Caco-2 (cell line): ENCODE measurements at regions of chr13 and their contacts with region 1.

Region 1: DNA sequence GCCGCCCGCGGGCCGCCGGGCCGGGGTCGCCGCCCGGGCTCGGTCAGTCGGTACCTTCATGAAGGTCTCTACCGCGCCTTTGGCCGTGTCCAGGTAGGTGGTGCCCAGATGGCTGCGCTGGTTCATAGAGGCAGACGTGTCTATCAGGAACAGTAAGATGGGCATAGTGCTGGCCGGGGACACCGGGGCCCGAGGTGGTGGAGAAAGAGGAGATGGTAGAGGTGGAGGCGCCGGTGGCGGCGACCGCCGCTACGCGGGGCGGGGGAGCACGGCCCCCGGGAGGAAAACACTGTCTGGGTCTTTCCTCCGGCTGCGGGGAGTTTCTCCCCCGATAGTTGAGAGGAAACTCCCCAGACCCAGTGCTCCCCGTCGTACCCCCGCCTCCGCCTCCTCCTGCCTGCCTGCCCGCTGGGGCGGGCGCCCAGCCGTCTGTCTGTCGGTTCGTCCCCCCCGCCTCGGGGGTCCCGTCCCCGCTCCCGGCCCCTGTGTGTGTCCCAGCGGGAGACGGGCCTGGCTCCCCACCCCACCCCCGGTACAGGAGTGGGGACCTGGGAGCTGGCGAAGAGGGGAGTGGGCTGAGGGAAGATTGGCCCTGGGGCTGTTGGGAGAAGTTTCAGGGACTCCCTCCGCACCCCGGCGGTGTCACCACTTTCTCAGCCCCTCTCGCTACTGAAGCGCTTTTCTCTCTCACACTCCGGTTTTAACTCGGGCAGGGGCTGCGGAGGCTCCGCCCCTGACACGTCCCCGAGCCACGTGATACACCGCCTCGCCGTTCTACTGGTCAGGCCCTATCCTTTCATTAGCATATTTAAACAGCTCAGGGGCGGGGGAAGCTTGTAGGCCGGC is at the start of gene INTS6:
- DNase-seq: peak; percentile 100
- H3K4me3 ChIP-seq: peak within 1 kb of the TSS; percentile 72
- H3K4me3 Mint-ChIP-seq: peak within 1 kb of the TSS; percentile 72
- H3K27ac Mint-ChIP-seq: peak within 1 kb of the TSS; percentile 82
- H3K4me1 ChIP-seq: peaks cover 12% of the 10 kb centered on the region; the same call in 1 of the 2 replicates
- H3K4me1 Mint-ChIP-seq: no peaks in the 10 kb centered on the region
- H3K27me3 ChIP-seq: no peaks in the 10 kb centered on the region
- H3K27me3 Mint-ChIP-seq: no peaks in the 10 kb centered on the region
- CTCF ChIP-seq: no peak
- total RNA-seq, gene INTS6: 42.6 and 46.7 TPM in 2 replicates

Region 2: DNA sequence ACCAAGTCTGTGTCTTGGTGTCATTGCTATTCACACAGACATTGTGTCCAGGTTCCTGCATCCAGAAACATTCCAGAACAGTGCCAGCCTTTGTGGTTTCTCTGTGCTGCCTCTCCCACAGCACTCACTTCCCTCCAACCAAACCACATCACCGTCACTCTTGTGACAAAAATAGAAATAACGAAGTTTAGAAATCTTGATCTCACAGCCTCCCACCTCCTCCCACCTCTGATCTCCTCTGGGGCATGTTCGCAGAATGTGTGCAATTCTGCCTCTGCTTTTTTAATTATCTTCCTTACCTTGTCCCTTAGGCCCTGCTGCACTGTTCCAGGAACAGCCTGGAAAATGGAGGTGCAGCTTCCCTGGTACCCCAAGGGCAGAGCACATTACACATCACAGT is 121.8 kb before region 1 on chr13:
- CTCF ChIA-PET with region 1: no interaction called
- POLR2A ChIA-PET with region 1: interaction called, 15 read pairs
- intact Hi-C with region 1: no loop called
- DNase-seq: no peak
- H3K4me3 ChIP-seq: no peak overlapping the region
- H3K4me3 Mint-ChIP-seq: no peak overlapping the region
- H3K27ac Mint-ChIP-seq: no peak overlapping the region
- H3K4me1 ChIP-seq: no peaks in the 10 kb centered on the region
- H3K4me1 Mint-ChIP-seq: no peaks in the 10 kb centered on the region
- H3K27me3 ChIP-seq: no peaks in the 10 kb centered on the region
- H3K27me3 Mint-ChIP-seq: no peaks in the 10 kb centered on the region
- CTCF ChIP-seq: no peak

Region 3: DNA sequence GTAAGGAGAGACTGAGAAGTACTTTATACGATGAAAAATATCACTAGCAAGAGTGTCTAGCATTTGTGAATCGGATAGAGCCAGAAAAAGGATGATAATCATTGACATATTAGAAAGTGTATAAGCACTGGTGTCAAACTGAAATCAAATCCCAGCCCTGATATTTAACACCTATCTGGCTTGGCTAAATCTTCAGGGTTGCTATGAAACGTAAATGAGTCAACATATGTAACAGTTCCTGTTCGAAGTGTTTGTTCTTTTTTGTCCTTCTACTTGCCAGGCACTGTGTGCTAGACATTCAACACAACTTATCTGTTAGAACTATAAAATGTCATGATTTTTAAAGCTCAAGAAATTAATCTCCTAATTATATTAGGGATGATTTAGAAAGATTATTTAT is 72.3 kb before region 1 on chr13:
- CTCF ChIA-PET with region 1: no interaction called
- POLR2A ChIA-PET with region 1: no interaction called
- intact Hi-C with region 1: no loop called
- DNase-seq: no peak
- H3K4me3 ChIP-seq: no peak overlapping the region
- H3K4me3 Mint-ChIP-seq: no peak overlapping the region
- H3K27ac Mint-ChIP-seq: no peak overlapping the region
- H3K4me1 ChIP-seq: no peaks in the 10 kb centered on the region
- H3K4me1 Mint-ChIP-seq: no peaks in the 10 kb centered on the region
- H3K27me3 ChIP-seq: no peaks in the 10 kb centered on the region
- H3K27me3 Mint-ChIP-seq: no peaks in the 10 kb centered on the region
- CTCF ChIP-seq: no peak

Region 4: DNA sequence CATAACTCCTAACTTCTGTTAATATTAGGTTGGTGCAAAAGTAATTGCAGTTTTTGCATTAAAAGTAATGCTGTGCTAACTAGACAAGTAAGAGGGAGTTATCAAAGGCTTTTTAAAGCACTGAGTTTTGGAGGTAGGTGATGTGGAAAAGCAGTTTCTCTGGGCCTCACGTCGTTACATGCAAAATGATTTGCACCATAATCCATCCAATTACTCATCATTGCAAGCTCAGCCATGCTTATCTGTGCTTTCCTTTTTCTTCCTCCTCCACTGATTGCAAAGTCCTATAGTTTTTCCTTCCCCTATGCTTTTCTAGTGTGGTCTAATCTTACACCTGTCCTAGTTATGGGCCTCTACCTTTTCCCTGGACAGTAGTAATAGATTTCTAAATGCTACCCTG is 35.6 kb after region 1 on chr13:
- CTCF ChIA-PET with region 1: no interaction called
- POLR2A ChIA-PET with region 1: no interaction called
- intact Hi-C with region 1: no loop called
- DNase-seq: no peak
- H3K4me3 ChIP-seq: no peak overlapping the region
- H3K4me3 Mint-ChIP-seq: no peak overlapping the region
- H3K27ac Mint-ChIP-seq: no peak overlapping the region
- H3K4me1 ChIP-seq: no peaks in the 10 kb centered on the region
- H3K4me1 Mint-ChIP-seq: no peaks in the 10 kb centered on the region
- H3K27me3 ChIP-seq: no peaks in the 10 kb centered on the region
- H3K27me3 Mint-ChIP-seq: peaks cover 3% of the 10 kb centered on the region
- CTCF ChIP-seq: no peak

Region 5: DNA sequence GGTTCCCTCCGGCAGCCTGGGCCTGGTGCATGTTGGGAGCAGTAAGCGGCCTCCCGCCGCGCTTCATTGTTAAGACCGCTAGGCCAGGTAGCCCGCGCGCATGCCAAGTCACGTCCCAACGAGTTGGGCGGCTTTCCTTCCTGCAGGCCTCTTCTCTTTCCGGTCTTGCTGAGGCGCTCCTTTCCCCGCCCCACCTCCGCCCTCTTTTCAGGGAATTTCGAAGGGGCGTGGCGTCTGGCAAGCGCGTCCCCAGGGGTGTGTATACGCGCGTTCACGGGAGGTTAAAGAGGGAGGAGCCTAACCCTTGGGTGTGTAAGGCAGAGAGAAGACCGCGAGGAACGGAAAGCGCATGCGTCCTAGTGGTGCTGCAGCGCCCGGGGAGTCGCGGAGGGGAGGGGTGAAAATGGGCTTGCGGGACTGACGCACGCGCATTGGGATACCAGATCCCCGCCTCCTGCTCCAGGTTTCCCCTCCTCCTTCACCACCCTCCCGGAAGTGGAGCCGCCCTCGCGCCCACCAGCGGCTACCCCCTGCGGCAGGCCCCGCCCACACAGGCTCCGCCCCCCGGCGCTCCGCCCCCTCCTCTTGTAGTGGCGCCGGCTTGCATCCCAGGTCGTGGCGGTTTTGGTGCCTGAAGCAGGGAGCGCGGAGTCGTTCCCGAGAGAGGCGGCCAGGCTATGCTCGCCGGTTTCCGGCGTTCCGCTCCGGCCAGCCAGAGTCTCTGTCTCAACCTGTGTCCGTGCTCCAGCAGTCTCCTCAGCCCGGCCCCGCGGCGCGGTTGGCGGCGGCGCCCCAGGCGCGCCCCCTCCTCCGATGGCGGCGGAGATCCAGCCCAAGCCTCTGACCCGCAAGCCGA is 131.5 kb after region 1 on chr13 and contains the start of gene WDFY2:
- CTCF ChIA-PET with region 1: interaction called, 3 read pairs
- POLR2A ChIA-PET with region 1: interaction called, 18 read pairs
- intact Hi-C with region 1: loop called (anchors 1 kb)
- DNase-seq: peak; percentile 99 to 100
- H3K4me3 ChIP-seq: peak within 1 kb of the TSS; percentile 70
- H3K4me3 Mint-ChIP-seq: peak within 1 kb of the TSS; percentile 75
- H3K27ac Mint-ChIP-seq: peak within 1 kb of the TSS; percentile 38
- H3K4me1 ChIP-seq: peaks cover 21% of the 10 kb centered on the region
- H3K4me1 Mint-ChIP-seq: peaks cover 7% of the 10 kb centered on the region
- H3K27me3 ChIP-seq: no peaks in the 10 kb centered on the region
- H3K27me3 Mint-ChIP-seq: peaks cover under 1% of the 10 kb centered on the region
- CTCF ChIP-seq: peak in 1 of 2 experiments; percentile 24
- total RNA-seq, gene WDFY2: 6.3 and 9.2 TPM in 2 replicates

Region 6: DNA sequence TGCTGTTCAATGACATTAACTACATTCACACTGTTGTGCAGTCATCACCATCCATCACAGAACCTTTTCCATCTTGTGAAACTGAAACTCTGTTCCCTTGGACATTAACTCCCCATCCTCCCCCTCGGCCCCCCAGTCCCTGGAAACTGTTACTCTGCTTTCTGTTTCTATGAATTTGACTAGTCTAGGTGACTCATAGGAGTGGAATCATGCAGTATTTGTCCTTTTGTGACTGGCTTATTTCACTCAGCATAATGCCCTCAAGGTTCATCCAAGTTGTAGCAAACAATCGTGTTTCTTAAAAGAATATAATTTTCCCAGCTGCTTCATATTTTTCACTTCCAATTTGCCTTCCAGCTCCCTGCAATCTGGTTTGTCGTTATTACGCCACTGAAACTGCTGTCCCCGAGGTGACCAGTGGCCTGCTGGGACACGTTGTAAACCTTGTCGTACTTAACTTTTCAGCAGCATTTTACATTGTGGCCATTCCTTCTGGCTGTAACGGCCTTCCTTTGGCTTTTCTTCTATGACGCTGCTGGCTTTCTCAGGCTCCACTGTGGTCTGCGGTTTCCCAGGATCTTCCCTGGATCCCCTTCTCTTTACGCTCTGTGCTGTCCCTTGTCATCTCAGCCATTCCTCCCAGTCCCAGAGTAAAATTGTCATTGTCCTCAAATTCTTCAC is 277.4 kb after region 1 on chr13:
- CTCF ChIA-PET with region 1: interaction called, 3 read pairs
- POLR2A ChIA-PET with region 1: interaction called, 5 read pairs
- intact Hi-C with region 1: loop called (anchors 5 kb)
- DNase-seq: peak in 1 of 2 experiments; percentile 7
- H3K4me3 ChIP-seq: no peak overlapping the region
- H3K4me3 Mint-ChIP-seq: no peak overlapping the region
- H3K27ac Mint-ChIP-seq: no peak overlapping the region
- H3K4me1 ChIP-seq: peaks cover 12% of the 10 kb centered on the region; the same call in 1 of the 2 replicates
- H3K4me1 Mint-ChIP-seq: no peaks in the 10 kb centered on the region
- H3K27me3 ChIP-seq: no peaks in the 10 kb centered on the region
- H3K27me3 Mint-ChIP-seq: no peaks in the 10 kb centered on the region
- CTCF ChIP-seq: no peak

Region 7: DNA sequence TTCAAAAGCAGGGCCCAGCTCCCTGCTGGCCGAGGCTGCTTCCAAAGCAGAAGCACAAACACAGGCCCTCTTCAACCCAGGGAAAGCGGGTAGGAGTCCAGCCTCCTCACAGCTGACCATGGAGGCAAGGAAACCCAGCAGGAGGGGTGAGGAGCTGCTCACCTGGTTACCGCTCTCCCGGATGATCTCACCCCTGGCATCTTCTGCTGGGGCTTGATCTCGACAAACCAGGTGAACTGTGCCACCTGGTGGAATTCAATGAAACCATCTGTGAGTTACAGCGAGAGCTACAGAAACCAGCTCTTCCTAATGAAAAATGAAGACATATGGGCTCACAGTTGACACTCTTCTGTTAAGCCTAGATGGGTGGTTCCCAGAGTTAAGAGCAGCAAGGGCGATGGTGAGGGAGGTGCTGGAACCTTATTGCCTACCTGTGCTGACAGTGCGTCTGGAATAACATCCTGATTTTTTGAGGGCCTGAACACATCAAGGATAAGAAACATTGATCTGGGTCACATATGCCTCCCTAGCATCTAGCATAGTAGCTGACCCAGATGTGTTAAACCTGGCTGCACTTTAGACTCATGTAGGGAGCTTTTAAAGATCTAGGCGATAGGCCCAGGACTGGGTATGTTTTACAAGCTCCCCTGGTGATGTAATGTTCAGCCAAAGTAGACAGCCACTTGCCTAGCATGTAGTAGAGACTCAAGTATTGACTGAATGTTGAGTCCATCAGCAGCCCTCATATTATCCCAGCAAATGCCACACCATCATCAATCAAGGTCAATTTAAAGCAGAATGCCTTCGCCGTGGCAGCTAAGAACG is 345.3 kb after region 1 on chr13:
- CTCF ChIA-PET with region 1: interaction called, 11 read pairs
- POLR2A ChIA-PET with region 1: interaction called, 13 read pairs
- intact Hi-C with region 1: no loop called
- DNase-seq: peak; percentile 68 to 72
- H3K4me3 ChIP-seq: no peak overlapping the region
- H3K4me3 Mint-ChIP-seq: no peak overlapping the region
- H3K27ac Mint-ChIP-seq: no peak overlapping the region
- H3K4me1 ChIP-seq: peaks cover 13% of the 10 kb centered on the region; the same call in 1 of the 2 replicates
- H3K4me1 Mint-ChIP-seq: no peaks in the 10 kb centered on the region
- H3K27me3 ChIP-seq: no peaks in the 10 kb centered on the region
- H3K27me3 Mint-ChIP-seq: no peaks in the 10 kb centered on the region
- CTCF ChIP-seq: peak; percentile 59 to 69

Region 8: DNA sequence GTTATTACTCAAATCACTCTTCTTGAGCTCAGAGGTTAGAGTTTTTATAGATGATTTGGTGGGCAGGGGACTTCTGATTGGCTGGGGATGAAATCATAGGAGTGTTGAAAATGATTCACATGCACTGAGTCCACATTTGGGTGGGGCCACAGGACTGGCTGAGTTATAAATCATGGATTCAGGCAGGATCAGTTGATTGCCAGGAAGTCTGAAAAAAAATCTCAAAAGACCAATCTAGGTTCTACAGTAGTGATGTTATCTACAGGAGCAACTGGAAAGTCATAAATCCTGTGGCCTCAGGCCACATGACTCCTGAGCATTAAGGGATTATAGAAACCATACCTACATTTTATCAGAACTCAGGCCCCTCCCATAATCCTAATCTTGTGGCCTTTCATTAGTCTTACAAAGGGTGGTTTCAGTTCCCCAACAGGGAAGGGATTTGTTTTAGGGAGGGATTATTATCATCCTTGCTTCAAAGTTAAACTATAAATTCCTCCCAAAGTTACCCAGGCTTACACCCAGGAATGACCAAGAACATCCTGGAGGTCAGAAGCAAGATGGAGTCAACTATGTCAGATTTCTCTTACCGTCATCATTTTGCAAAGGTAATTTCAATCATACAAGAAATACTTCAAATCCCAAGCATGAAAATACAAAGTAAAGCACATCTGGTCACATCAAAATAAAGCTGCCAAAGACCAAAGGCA is 403.6 kb after region 1 on chr13:
- CTCF ChIA-PET with region 1: no interaction called
- POLR2A ChIA-PET with region 1: interaction called, 4 read pairs
- intact Hi-C with region 1: loop called (anchors 5 kb)
- DNase-seq: peak; percentile 48 to 60
- H3K4me3 ChIP-seq: no peak overlapping the region
- H3K4me3 Mint-ChIP-seq: no peak overlapping the region
- H3K27ac Mint-ChIP-seq: peak overlapping the region; percentile 26
- H3K4me1 ChIP-seq: peaks cover 36% of the 10 kb centered on the region
- H3K4me1 Mint-ChIP-seq: peaks cover 39% of the 10 kb centered on the region
- H3K27me3 ChIP-seq: no peaks in the 10 kb centered on the region
- H3K27me3 Mint-ChIP-seq: no peaks in the 10 kb centered on the region
- CTCF ChIP-seq: no peak